Activated CD4-positive, alpha-beta memory T cell treated with anti-CD3 and anti-CD28 coated beads, Interleukin-2, amount 10 ng/mL, durations not matched to agents 7 days and 5 days (primary cell): ENCODE measurements at regions of chr10 and their contacts with region 1.

Region 1: GRCh38 chr10:91163269-91163868 is 57.1 kb upstream of the PCGF5 start:
- DNase-seq: peak; percentile 78
- H3K4me3 Mint-ChIP-seq: peak overlapping the region; percentile 86
- H3K27ac Mint-ChIP-seq: peak overlapping the region; percentile 80
- H3K4me1 Mint-ChIP-seq: peaks cover 30% of the 10 kb centered on the region
- H3K27me3 Mint-ChIP-seq: peaks cover 2% of the 10 kb centered on the region

Region 2: DNA sequence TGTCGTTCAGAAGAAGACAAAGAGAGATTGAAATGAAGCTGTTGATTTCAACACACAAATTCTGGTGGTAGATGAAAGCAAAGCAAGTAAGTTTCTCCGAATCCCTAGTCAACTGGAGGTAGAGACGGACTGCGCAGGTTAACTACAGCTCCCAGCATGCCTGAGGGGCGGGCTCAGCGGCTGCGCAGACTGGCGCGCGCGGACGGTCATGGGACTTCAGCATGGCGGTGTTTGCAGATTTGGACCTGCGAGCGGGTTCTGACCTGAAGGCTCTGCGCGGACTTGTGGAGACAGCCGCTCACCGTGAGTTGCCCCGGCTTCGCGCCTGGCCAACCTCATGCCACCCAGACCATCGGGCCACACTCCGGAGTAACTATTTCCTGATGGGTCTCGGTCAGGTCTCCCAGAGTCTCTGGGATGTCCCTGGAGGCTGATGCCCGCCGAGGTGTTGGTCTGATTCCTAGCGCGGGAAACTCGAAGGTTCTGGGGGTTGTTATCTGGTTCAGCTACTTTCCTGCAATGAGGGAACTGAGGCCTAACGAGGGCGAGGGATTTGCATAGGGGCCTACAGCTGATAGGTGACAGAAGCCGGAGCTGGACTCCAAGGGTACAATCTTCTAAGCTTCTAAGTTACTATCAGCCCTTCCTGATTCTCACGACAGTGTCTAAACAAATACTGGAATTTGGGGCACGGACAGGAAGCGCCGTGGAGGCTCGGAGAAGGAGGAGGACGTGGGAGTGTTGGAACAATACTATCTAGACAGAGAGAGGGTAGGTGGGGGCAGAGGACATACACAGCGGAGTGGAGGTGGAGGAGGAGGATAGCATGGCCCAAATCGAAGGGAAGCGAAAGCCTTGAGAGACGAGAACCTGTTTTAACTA is 291.4 kb before region 1 on chr10 and contains the start of gene RPP30:
- CTCF ChIA-PET with region 1: no interaction called
- POLR2A ChIA-PET with region 1: interaction called, 13 read pairs
- DNase-seq: peak; percentile 86
- H3K4me3 Mint-ChIP-seq: peak within 1 kb of the TSS; percentile 95
- H3K27ac Mint-ChIP-seq: peak within 1 kb of the TSS; percentile 83
- H3K4me1 Mint-ChIP-seq: peaks cover 33% of the 10 kb centered on the region
- H3K27me3 Mint-ChIP-seq: peaks cover 18% of the 10 kb centered on the region
- total RNA-seq, gene RPP30: 45.5 to 53.9 TPM

Region 3: GRCh38 chr10:91140995-91141549 is 22.3 kb before region 1 on chr10:
- CTCF ChIA-PET with region 1: no interaction called
- POLR2A ChIA-PET with region 1: interaction called, 10 read pairs
- DNase-seq: no peak
- H3K4me3 Mint-ChIP-seq: no peak overlapping the region
- H3K27ac Mint-ChIP-seq: no peak overlapping the region
- H3K4me1 Mint-ChIP-seq: peaks cover 11% of the 10 kb centered on the region
- H3K27me3 Mint-ChIP-seq: no peaks in the 10 kb centered on the region

Region 4: GRCh38 chr10:91198781-91199180 is 35.4 kb after region 1 on chr10:
- CTCF ChIA-PET with region 1: no interaction called
- POLR2A ChIA-PET with region 1: interaction called, 30 read pairs
- DNase-seq: no peak
- H3K4me3 Mint-ChIP-seq: peak overlapping the region; percentile 3
- H3K27ac Mint-ChIP-seq: peak overlapping the region; percentile 74
- H3K4me1 Mint-ChIP-seq: peaks cover 69% of the 10 kb centered on the region
- H3K27me3 Mint-ChIP-seq: no peaks in the 10 kb centered on the region

Region 5: DNA sequence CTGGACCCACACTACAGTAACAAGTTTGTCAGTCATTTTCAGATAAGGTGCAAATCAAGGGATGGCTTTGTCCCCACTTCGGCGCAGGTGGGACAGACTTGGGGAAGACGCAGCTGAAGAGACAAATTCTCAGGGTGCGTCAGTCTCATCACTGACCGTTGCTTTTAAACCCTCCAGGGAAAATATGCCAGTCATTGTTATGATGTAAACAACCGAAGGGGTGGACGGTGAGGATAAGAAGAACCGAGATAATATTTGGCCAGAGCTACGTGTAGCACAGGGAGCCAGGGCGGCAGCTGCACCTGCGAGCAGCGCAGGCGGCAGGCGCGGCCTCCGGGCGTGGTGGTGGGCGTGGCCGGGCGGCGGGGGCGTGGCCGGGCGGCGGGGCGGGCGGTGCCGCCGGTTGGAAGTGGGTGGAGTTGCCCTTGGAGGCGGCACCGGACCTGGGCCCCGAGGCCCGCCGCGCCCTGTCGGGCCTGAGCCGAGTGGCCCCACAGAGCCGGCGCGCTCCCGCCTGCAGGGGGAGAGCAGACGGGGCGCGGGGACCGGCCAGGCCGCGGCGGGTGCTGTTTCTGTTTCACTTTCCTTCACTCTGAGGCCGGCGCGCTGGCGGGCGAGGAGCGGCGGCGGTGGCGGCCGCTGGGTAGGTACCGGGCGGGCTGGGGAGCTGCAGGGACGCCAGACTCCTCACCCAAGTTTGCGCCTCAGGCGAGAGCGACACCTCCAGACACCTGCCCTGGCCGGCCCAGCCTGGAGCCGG is 57.0 kb after region 1 on chr10 and contains the start of gene PCGF5:
- CTCF ChIA-PET with region 1: interaction called, 11 read pairs
- POLR2A ChIA-PET with region 1: interaction called, 38 read pairs
- DNase-seq: peak; percentile 93
- H3K4me3 Mint-ChIP-seq: peak within 1 kb of the TSS; percentile 88
- H3K27ac Mint-ChIP-seq: peak within 1 kb of the TSS; percentile 76
- H3K4me1 Mint-ChIP-seq: peaks cover 42% of the 10 kb centered on the region
- H3K27me3 Mint-ChIP-seq: no peaks in the 10 kb centered on the region
- total RNA-seq, gene PCGF5: 44.7 to 45.9 TPM